ENCODE measurements at regions of chr9 and their contacts with region 1.

Region 1: GRCh38 chr9:136865735-136866103 is 389 bp downstream of the EDF1 start:
- DNase-seq: no peak
- H3K4me3 ChIP-seq: peak overlapping the region; percentile 48 to 98 (median 54)
- H3K27ac ChIP-seq: no peak overlapping the region
- H3K4me1 ChIP-seq: peaks cover 6% of the 10 kb centered on the region
- H3K27me3 ChIP-seq: no peaks in the 10 kb centered on the region
- CTCF ChIP-seq: no peak
- POLR2A ChIP-seq: no peak

Region 2: GRCh38 chr9:136640171-136641111 is 225.3 kb before region 1 on chr9:
- CTCF ChIA-PET with region 1: no interaction called
- POLR2A ChIA-PET with region 1: no interaction called
- dilution Hi-C with region 1: no loop called
- intact Hi-C with region 1: no loop called
- DNase-seq: no peak
- H3K4me3 ChIP-seq: no peak overlapping the region
- H3K27ac ChIP-seq: no peak overlapping the region
- H3K4me1 ChIP-seq: peaks cover 34% of the 10 kb centered on the region
- H3K27me3 ChIP-seq: no peaks in the 10 kb centered on the region
- CTCF ChIP-seq: no peak
- POLR2A ChIP-seq: no peak

Region 3: GRCh38 chr9:136762915-136763648 is 102.6 kb before region 1 on chr9:
- CTCF ChIA-PET with region 1: no interaction called
- POLR2A ChIA-PET with region 1: no interaction called
- dilution Hi-C with region 1: no loop called
- intact Hi-C with region 1: no loop called
- DNase-seq: peak; percentile 29
- H3K4me3 ChIP-seq: no peak overlapping the region
- H3K27ac ChIP-seq: no peak overlapping the region
- H3K4me1 ChIP-seq: no peaks in the 10 kb centered on the region
- H3K27me3 ChIP-seq: no peaks in the 10 kb centered on the region
- CTCF ChIP-seq: no peak
- POLR2A ChIP-seq: no peak

Region 4: DNA sequence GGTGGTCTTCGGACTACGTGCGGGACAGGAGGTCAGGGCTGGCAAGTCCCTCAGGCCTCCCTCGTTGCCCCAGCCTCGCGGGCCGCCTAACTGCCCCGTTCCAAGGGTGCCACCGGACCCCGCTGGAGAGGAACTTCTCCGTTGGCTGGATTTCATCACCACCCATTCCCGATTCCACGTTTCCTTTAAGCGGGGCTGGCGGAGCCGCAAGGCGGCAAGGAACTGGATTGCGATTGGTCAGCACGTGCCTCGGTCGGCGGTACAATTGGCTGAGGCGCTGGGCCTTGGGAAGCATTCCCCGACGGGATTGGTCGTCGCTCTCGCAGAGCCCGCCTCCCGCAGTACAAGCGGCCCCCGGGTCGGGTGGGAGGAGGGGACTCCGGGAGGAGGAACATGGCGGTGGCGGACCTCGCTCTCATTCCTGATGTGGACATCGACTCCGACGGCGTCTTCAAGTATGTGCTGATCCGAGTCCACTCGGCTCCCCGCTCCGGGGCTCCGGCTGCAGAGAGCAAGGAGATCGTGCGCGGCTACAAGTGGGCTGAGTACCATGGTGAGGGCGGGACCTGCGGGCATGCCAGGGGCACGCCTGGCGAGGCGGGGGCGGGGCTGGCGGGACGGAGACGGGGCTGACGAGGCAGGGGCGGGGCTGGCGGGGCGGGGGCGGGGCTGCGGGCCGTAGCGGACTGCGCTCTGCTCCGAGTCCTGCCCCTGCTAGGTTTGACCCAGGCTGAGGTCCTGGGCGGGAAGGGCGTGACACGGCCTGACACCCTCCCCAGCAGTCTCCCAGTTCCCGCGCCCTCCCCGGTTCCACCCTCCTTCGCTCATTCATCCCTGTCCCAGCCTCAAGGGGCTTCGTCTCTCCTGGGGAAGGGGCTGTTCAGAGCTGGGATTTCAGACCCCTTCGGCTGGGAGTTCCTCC is 16.4 kb before region 1 on chr9 and contains the start of gene PHPT1:
- CTCF ChIA-PET with region 1: no interaction called
- POLR2A ChIA-PET with region 1: no interaction called
- dilution Hi-C with region 1: no loop called
- intact Hi-C with region 1: loop called (anchors 1 kb)
- DNase-seq: peak; percentile 99
- H3K4me3 ChIP-seq: peak within 1 kb of the TSS; percentile 29 to 90 (median 54)
- H3K27ac ChIP-seq: no peak within 1 kb of the TSS
- H3K4me1 ChIP-seq: peaks cover 10% of the 10 kb centered on the region
- H3K27me3 ChIP-seq: peaks cover 8 to 23% of the 10 kb centered on the region in 2 experiments
- CTCF ChIP-seq: no peak
- POLR2A ChIP-seq: peak; percentile 97
- total RNA-seq, gene PHPT1: 139 and 165 TPM in 2 replicates

Region 5: DNA sequence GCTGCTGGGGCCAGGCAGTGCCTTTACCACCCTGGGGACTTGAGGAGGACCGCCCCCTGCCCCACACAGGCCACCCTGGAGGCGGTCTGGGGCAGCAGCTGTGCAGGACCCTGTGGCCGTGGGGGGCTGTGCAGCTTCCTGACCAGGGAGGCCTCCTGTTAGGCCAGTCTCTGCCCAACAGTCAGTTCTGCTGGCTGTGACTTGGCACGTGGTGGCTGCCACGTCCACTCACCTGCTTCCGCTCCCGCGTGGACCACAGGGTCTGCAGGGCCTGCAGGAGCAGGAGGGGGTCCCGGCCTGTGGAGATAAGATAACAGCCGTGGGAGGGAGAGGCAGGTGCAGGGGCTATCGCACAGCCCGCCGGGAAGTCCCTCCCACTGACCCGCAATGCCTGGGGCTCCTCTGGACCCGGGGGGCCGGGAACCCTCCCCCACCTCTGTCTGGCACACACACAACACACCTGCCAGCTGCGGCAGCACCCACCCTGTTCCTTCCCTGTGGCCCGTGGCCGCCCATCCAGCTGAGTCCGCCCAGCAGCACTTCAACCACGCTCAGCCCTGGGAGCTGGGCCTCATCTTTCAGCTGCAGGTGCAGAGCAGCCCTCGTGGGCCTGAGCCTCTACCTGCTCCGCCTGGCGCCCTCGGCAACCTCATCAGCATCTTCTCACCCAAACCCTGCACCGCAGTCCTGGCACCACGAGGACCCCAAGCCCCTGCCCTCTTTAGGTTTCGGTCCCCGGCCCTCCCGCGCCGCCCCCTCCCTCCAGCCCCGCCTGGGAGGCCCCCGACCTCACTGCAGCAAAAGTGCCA is 517.6 kb after region 1 on chr9:
- CTCF ChIA-PET with region 1: no interaction called
- POLR2A ChIA-PET with region 1: no interaction called
- dilution Hi-C with region 1: no loop called
- intact Hi-C with region 1: no loop called
- DNase-seq: no peak
- H3K4me3 ChIP-seq: no peak overlapping the region
- H3K27ac ChIP-seq: no peak overlapping the region
- H3K4me1 ChIP-seq: peaks cover 13% of the 10 kb centered on the region
- H3K27me3 ChIP-seq: no peaks in the 10 kb centered on the region
- CTCF ChIP-seq: no peak
- POLR2A ChIP-seq: no peak

Measured in endothelial cell of umbilical vein (primary cell).